ENCODE measurements at regions of chr21 and their contacts with region 1.

Region 1: DNA sequence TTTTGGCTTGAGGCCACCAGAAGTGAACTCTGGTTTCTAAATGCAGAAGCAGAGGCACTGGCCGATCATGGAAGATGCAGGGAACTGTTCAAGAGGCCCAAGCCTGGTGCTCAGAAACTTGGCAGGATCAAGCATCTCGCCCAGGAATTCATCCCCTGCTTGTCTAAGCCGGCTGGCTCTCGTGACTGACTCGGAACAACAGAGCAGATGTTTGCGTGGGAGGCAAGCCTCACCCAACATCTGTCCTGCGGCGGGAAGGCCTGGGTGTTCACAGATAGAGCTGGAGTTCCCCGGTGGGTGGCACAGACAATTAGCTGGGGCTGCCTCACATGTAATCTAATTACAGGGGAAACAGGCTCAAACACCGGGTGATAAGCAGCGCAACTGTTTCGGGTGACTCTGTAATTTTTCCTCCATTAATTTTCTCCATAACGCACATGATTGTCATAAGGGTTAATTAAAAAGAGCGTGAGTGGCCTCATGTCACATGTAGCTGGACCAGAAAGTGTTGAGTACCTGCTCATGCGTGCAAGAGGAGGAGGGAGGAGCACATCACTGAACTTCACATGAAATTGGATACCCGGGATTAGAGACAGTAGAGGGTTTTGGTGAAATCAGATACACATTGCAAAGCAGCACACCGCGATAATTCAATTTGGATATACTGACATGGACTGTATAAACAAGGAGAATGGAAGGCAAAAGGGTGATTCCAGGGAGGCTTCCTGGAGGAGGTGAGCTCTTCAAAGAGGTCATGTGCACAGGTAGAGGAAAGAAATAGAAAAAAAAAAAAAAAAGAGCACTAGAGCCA is 180.0 kb downstream of the ETS2 start:
- DNase-seq: no peak
- H3K4me3 ChIP-seq: no peak overlapping the region
- H3K27ac ChIP-seq: peak overlapping the region in 7 of 8 donors; percentile 60 to 85 (median 76)
- H3K4me1 ChIP-seq: peaks cover 18 to 64% (median 39%) of the 10 kb centered on the region in 6 donors
- H3K27me3 ChIP-seq: peaks cover 0 to 86% (median 3%) of the 10 kb centered on the region in 7 donors
- CTCF ChIP-seq: no peak
- POLR2A ChIP-seq: no peak

Region 2: DNA sequence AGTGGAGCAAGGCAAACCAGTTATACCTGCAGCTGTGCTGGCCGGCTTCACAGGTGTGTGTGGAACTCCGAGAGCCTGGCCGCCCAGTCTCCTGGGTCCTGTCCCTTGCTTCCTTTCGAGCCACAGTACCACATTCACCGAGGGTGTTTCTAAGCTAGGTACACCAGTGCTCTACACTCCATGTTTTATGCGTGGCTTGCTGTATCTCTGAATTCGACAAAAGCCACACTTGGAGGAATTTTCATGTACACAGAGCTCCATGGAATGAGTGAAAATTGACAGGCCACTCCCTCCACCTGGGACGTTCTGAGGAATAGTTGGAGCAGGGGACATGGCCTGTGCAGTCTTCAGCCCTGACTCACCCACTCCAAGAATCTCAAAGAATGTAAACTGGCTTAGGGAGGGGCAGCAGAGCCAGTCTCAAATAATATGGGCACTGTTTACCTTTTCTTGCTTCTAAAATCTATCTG is 166.0 kb before region 1 on chr21:
- intact Hi-C with region 1: loop called (anchors 5 kb)
- DNase-seq: no peak
- H3K4me3 ChIP-seq: no peak overlapping the region
- H3K27ac ChIP-seq: peak overlapping the region in 6 of 8 donors; percentile 6 to 61 (median 47)
- H3K4me1 ChIP-seq: peaks cover 0 to 71% (median 29%) of the 10 kb centered on the region in 6 donors
- H3K27me3 ChIP-seq: no peaks in the 10 kb centered on the region
- CTCF ChIP-seq: no peak
- POLR2A ChIP-seq: no peak

Region 3: GRCh38 chr21:38925923-38926322 is 59.9 kb before region 1 on chr21:
- intact Hi-C with region 1: no loop called
- DNase-seq: no peak
- H3K4me3 ChIP-seq: peak overlapping the region in 3 of 8 donors; percentile 23 to 54 (median 30)
- H3K27ac ChIP-seq: peak overlapping the region in 7 of 8 donors; percentile 53 to 82 (median 68)
- H3K4me1 ChIP-seq: peaks cover 3 to 31% (median 16%) of the 10 kb centered on the region in 6 donors
- H3K27me3 ChIP-seq: peaks cover 0 to 16% (median 0%) of the 10 kb centered on the region in 7 donors
- CTCF ChIP-seq: no peak
- POLR2A ChIP-seq: no peak

Region 4: GRCh38 chr21:39094847-39095579 is 109.2 kb after region 1 on chr21:
- intact Hi-C with region 1: loop called (anchors 10 kb)
- DNase-seq: no peak
- H3K4me3 ChIP-seq: no peak overlapping the region
- H3K27ac ChIP-seq: peak overlapping the region; percentile 72 to 97 (median 90)
- H3K4me1 ChIP-seq: peaks cover 11 to 93% (median 56%) of the 10 kb centered on the region in 6 donors
- H3K27me3 ChIP-seq: no peaks in the 10 kb centered on the region
- CTCF ChIP-seq: peak in 1 of 11 experiments; percentile 12
- POLR2A ChIP-seq: no peak

Region 5: DNA sequence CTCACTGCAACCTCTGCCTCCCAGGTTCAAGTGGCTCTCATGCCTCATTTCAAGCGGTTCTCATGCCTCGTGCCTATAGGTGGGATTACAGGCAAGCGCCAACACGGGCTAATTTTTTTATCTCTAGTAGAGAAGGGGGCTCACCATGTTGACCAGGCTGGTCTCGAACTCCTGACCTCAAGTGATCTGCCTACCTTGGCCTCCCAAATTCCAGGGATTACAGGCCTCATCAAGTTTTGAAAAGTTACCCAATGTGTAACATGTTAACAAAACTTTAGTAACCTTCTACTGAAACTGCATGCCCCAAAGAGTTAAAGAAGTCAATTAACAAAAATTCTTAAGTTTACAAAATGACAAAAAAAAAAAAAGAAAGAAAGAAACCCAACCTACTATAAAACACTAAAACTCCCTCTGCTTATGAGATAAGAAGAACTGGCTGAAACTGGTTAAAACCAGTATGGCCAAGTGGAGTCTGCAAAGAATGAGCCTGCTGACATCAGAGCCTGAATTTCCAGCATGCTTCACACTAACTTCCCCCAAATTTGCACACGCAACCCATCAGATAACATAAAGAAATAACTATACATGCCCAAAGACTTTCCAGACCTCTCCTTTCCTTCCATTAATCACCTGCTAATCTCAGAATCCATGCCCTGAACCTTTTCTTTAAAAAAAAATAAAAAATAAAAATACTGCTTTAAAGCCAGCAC is 223.0 kb after region 1 on chr21:
- intact Hi-C with region 1: no loop called
- DNase-seq: no peak
- H3K4me3 ChIP-seq: no peak overlapping the region
- H3K27ac ChIP-seq: peak overlapping the region in 1 of 8 donors; percentile 2
- H3K4me1 ChIP-seq: peaks cover 0 to 16% (median 0%) of the 10 kb centered on the region in 6 donors
- H3K27me3 ChIP-seq: no peaks in the 10 kb centered on the region
- CTCF ChIP-seq: no peak
- POLR2A ChIP-seq: no peak

Region 6: GRCh38 chr21:40318434-40318833 is 1332.7 kb after region 1 on chr21:
- intact Hi-C with region 1: no loop called
- DNase-seq: no peak
- H3K4me3 ChIP-seq: no peak overlapping the region
- H3K27ac ChIP-seq: no peak overlapping the region
- H3K4me1 ChIP-seq: no peaks in the 10 kb centered on the region
- H3K27me3 ChIP-seq: no peaks in the 10 kb centered on the region
- CTCF ChIP-seq: no peak
- POLR2A ChIP-seq: no peak